ENCODE measurements at regions of chr2 and their contacts with region 1.

Region 1: DNA sequence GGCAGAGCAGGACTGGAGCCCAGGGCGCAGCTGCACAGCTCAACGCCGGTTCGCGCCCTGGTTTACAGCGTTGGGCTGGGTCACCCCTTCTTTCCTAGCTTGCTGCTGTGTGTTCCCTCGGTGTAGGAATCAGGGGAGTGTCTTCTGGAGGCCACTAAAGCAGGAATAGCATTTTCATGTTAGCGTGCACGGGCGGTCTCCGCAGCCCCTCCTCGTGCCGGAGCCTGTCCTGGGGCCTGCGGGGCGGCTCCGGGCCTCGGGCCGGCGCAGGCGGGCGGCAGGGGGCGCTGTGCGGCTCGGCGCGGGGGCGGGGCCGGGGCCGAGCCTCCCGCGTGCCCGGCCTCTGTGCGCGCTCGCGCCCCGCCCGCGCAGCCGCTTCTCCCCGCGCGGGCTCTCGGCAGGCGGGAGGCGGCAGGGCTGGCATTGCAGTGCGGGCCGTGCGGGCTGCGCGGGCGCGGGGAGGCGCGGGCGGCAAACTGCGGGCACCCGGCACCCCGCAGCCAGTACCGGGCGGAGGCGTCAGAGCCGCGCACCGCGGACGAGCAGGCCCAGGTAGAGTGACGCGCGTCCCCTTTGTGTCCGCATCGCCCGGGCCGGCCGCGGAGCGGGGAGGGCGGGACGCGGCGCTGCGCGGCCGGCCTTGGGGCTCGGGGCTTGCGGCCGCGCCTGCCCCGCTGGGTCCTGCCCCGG is at the start of gene RNF144A:
- DNase-seq: peak; percentile 54 to 92 (median 74)
- ATAC-seq: peak; percentile 59 to 81 (median 80)
- H3K4me3 ChIP-seq: peak within 1 kb of the TSS; percentile 76 to 96 (median 86)
- H3K27ac ChIP-seq: peak within 1 kb of the TSS; percentile 76 to 91 (median 83)
- H3K4me1 ChIP-seq: peaks cover 25 to 38% (median 27%) of the 10 kb centered on the region in 3 donors
- H3K27me3 ChIP-seq: no peaks in the 10 kb centered on the region
- CTCF ChIP-seq: peak; percentile 16 to 38 (median 30)
- total RNA-seq, gene RNF144A: 21.3 to 78.7 (median 45.7) TPM

Region 2: GRCh38 chr2:6723865-6724604 is 193.2 kb before region 1 on chr2:
- intact Hi-C with region 1: no loop called
- DNase-seq: no peak
- ATAC-seq: peak in 2 of 4 donors; percentile 24 to 56
- H3K4me3 ChIP-seq: no peak overlapping the region
- H3K27ac ChIP-seq: no peak overlapping the region
- H3K4me1 ChIP-seq: no peaks in the 10 kb centered on the region
- H3K27me3 ChIP-seq: no peaks in the 10 kb centered on the region
- CTCF ChIP-seq: no peak

Region 3: GRCh38 chr2:7031547-7032245 is 114.5 kb after region 1 on chr2:
- intact Hi-C with region 1: loop called in 1 of 3 experiments (anchors 5 kb)
- DNase-seq: peak; percentile 86 to 99 (median 98)
- ATAC-seq: peak; percentile 88 to 96 (median 90)
- H3K4me3 ChIP-seq: no peak overlapping the region
- H3K27ac ChIP-seq: peak overlapping the region; percentile 36 to 62 (median 51)
- H3K4me1 ChIP-seq: peaks cover 29 to 40% (median 35%) of the 10 kb centered on the region in 3 donors
- H3K27me3 ChIP-seq: no peaks in the 10 kb centered on the region
- CTCF ChIP-seq: peak in 1 of 4 donors; percentile 7

Measured in pancreas (tissue), 10 donors.